CD8-positive, alpha-beta memory T cell (primary cell): ENCODE measurements at regions of chr5 and their contacts with region 1.

Region 1: DNA sequence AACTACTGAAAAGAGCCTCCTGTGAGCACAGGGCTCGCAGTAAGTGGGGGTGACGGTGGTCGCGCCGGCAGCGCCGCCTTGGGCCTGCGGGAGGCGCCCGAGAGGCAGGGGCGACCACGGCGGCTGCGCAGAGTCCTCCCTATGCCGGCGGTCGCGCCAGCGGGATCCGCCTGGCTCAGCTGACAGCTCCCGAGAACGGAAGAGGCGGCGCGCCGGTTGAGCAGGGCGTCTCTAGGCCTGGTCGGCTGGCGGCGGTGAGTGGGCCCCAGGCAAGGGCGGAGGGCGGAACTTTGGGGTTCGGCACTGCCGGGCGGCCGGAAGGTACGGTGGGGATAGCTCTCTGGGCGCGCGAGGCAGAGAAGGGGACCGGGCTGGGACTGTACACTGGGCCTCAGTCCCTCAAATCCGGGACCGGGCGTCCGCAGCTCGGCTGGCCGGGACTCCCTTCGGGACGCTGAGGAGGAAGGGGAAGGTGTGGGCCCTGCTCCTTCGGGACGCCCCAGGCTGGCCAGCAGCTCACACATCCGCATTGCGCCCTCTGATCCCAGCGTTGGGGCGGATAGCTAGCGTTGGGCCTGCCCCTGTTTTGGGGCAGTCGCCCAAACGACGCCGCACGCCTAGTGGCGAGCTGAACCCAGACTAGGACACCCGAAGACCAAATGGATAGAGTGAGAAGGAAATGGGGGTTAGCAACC is at the start of gene RNF14:
- DNase-seq: peak; percentile 91 to 96 (median 94)
- H3K4me3 ChIP-seq: peak within 1 kb of the TSS; percentile 69
- H3K4me3 Mint-ChIP-seq: peak within 1 kb of the TSS; percentile 87 to 97 (median 95)
- H3K27ac ChIP-seq: peak within 1 kb of the TSS; percentile 74
- H3K27ac Mint-ChIP-seq: peak within 1 kb of the TSS; percentile 96 to 99 (median 98)
- H3K4me1 ChIP-seq: peaks cover 17% of the 10 kb centered on the region
- H3K4me1 Mint-ChIP-seq: peaks cover 24 to 44% (median 40%) of the 10 kb centered on the region in 3 donors
- H3K27me3 ChIP-seq: no peaks in the 10 kb centered on the region
- H3K27me3 Mint-ChIP-seq: no peaks in the 10 kb centered on the region
- total RNA-seq, gene RNF14: 46.2 to 49.6 TPM

Region 2: DNA sequence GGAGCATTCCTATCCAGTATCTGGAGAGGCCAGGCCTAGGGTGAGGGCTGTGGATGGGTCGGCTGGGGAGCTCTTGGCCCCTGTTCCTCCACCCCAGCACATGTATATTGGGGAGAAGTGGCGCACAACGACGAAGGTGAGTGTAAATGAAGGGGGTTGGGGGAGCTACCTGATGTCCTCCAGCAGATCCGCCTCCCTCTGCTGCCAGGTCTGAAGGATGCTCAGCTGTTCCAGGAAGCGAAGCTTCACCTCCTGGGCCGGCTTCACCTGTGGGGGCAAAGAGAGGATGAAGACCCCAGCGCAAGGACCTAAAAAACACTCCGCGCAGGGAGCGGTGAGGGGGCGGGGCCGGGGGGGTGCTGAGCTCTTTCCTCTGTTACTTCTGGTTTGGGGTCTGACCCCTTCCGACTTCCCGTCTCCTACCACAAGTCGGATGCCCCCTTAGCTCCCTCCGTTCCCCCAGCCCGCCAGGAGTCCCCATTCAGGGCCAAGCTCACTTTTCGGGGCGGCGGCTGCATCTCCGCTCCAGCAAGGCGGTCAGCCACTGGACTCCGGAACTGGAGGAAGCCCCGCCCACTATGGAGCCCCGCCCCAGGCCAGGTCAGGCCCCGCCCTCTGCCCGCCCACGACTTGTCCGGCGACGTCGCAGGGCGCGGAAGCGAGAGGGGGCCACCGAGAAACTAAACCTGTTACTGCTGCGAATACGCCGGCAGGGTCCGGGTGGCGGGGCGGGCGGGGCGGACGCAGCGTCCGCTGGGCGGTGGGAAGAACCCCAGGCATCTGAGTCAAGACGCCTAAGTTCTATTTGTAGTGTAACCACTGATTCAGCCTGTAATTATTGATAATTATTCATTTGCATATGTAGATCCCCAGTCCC is 318.0 kb before region 1 on chr5 and contains the start of gene FCHSD1:
- CTCF ChIA-PET with region 1: no interaction called
- POLR2A ChIA-PET with region 1: interaction called, 10 read pairs
- DNase-seq: peak; percentile 81 to 90 (median 82)
- H3K4me3 ChIP-seq: peak within 1 kb of the TSS; percentile 78
- H3K4me3 Mint-ChIP-seq: peak within 1 kb of the TSS; percentile 82 to 99 (median 95)
- H3K27ac ChIP-seq: peak within 1 kb of the TSS; percentile 73
- H3K27ac Mint-ChIP-seq: peak within 1 kb of the TSS; percentile 85 to 99 (median 96)
- H3K4me1 ChIP-seq: peaks cover 26% of the 10 kb centered on the region
- H3K4me1 Mint-ChIP-seq: peaks cover 40 to 59% (median 49%) of the 10 kb centered on the region in 3 donors
- H3K27me3 ChIP-seq: no peaks in the 10 kb centered on the region
- H3K27me3 Mint-ChIP-seq: peaks cover 0 to 4% of the 10 kb centered on the region in 2 donors
- total RNA-seq, gene FCHSD1: 31.1 to 33.7 TPM

Region 3: GRCh38 chr5:141681695-141682641 is 287.1 kb before region 1 on chr5 and contains the start of gene ARAP3:
- CTCF ChIA-PET with region 1: interaction called, 11 read pairs
- POLR2A ChIA-PET with region 1: no interaction called
- DNase-seq: peak in 4 of 5 donors; percentile 17 to 64 (median 39)
- H3K4me3 ChIP-seq: peak within 1 kb of the TSS; percentile 50
- H3K4me3 Mint-ChIP-seq: peak within 1 kb of the TSS; percentile 65 to 91 (median 84)
- H3K27ac ChIP-seq: peak within 1 kb of the TSS; percentile 38
- H3K27ac Mint-ChIP-seq: peak within 1 kb of the TSS; percentile 7 to 93 (median 78)
- H3K4me1 ChIP-seq: peaks cover 27% of the 10 kb centered on the region
- H3K4me1 Mint-ChIP-seq: peaks cover 25 to 46% (median 29%) of the 10 kb centered on the region in 3 donors
- H3K27me3 ChIP-seq: no peaks in the 10 kb centered on the region
- H3K27me3 Mint-ChIP-seq: peaks cover 0 to 4% of the 10 kb centered on the region in 2 donors
- total RNA-seq, gene ARAP3: 6.9 to 7.9 TPM

Region 4: GRCh38 chr5:141701360-141702119 is 267.5 kb before region 1 on chr5:
- CTCF ChIA-PET with region 1: interaction called, 17 read pairs
- POLR2A ChIA-PET with region 1: no interaction called
- DNase-seq: no peak
- H3K4me3 ChIP-seq: peak overlapping the region; percentile 16
- H3K4me3 Mint-ChIP-seq: peak overlapping the region in 4 of 7 donors; percentile 11 to 91 (median 62)
- H3K27ac ChIP-seq: no peak overlapping the region
- H3K27ac Mint-ChIP-seq: peak overlapping the region in 6 of 8 donors; percentile 20 to 98 (median 63)
- H3K4me1 ChIP-seq: peaks cover 12% of the 10 kb centered on the region
- H3K4me1 Mint-ChIP-seq: peaks cover 12 to 20% (median 13%) of the 10 kb centered on the region in 3 donors
- H3K27me3 ChIP-seq: peaks cover 18% of the 10 kb centered on the region
- H3K27me3 Mint-ChIP-seq: peaks cover 25 to 40% of the 10 kb centered on the region in 2 donors

Region 5: GRCh38 chr5:141870871-141871270 is 98.2 kb before region 1 on chr5:
- CTCF ChIA-PET with region 1: no interaction called
- POLR2A ChIA-PET with region 1: no interaction called
- DNase-seq: peak in 1 of 5 donors; percentile 6
- H3K4me3 ChIP-seq: no peak overlapping the region
- H3K4me3 Mint-ChIP-seq: no peak overlapping the region
- H3K27ac ChIP-seq: no peak overlapping the region
- H3K27ac Mint-ChIP-seq: no peak overlapping the region
- H3K4me1 ChIP-seq: no peaks in the 10 kb centered on the region
- H3K4me1 Mint-ChIP-seq: peaks cover 4 to 8% (median 5%) of the 10 kb centered on the region in 3 donors
- H3K27me3 ChIP-seq: peaks cover 30% of the 10 kb centered on the region
- H3K27me3 Mint-ChIP-seq: peaks cover 35 to 68% of the 10 kb centered on the region in 2 donors

Region 6: DNA sequence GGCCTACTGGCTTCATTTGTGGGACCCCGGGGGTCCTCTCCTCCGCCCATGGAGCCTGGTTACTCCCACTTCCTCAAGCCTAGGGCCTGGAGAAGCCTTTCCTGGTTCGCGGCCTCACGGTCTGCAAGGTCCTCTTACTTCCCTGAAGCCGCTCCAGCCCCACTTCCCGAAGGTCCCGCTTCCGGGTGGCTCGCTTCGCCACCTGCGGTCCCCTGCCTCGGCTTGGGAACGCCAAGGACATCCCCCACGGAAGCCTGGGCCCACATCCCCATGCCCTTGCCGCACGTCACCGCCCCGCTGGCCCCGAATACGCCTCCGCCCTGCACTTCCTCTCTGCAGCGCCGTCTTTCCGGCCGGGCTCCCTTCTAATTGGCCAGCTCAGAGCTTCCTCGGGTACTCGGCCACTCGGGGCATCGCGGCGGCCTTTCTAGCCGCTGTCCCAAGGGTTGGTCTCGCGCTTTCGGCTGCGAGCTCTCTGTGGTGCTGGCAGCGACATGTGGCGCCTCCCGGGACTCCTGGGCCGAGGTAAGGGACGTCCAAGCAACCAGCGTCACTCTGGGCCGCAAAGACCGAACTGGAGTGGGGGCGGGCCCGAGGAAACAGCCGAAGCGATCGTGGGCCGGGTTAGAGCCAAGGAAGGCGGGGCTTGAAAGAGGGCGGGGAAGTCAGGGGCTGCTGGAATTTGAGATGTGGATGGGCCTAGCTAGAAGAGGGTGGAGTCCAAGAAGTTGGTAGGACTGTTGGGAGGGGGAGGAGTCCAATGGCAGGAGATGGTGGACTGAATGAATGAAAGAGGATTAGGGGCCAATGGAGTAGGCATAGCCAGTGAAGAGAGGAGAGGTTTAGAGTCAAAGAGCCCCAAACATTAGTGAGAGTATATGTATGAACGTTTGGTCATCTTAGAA is 45.4 kb before region 1 on chr5 and contains the start of gene DELE1:
- CTCF ChIA-PET with region 1: interaction called, 15 read pairs
- POLR2A ChIA-PET with region 1: interaction called, 17 read pairs
- DNase-seq: peak; percentile 83 to 93 (median 88)
- H3K4me3 ChIP-seq: peak within 1 kb of the TSS; percentile 92
- H3K4me3 Mint-ChIP-seq: peak within 1 kb of the TSS; percentile 80 to 98 (median 90)
- H3K27ac ChIP-seq: peak within 1 kb of the TSS; percentile 97
- H3K27ac Mint-ChIP-seq: peak within 1 kb of the TSS; percentile 92 to 99 (median 98)
- H3K4me1 ChIP-seq: peaks cover 15% of the 10 kb centered on the region
- H3K4me1 Mint-ChIP-seq: peaks cover 16 to 47% (median 37%) of the 10 kb centered on the region in 3 donors
- H3K27me3 ChIP-seq: no peaks in the 10 kb centered on the region
- H3K27me3 Mint-ChIP-seq: no peaks in the 10 kb centered on the region
- total RNA-seq, gene DELE1: 48.8 to 50.2 TPM

Region 7: DNA sequence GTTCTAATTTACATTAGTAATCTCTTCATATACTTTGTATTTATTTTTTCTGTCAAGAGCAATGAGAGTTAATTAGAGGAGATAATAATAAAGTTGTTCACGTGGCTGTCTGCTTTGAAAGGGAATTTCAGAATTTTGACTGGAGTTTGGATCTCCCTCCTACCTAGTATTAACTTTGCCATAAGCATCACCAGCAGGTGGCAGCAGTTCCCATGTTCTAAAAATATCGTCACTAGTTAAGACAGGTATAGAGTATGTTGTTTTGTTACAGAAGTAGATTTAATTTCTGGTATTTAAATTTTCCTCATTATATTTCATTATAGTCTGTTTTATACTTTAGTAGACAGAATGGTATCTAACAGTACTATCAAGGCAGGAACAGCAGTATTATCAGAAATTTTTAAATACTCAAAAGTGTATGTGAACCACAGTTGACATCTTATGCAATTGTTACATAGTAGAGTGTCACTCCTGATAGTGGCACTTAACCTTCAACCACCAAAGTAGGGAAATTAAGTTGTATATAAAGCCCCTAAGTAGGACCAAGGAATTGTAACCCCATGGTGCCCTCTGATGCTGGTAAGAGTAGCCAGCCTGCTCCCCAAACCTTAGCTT is 23.4 kb after region 1 on chr5:
- CTCF ChIA-PET with region 1: interaction called, 30 read pairs
- POLR2A ChIA-PET with region 1: interaction called, 3 read pairs
- DNase-seq: peak; percentile 53 to 80 (median 68)
- H3K4me3 ChIP-seq: no peak overlapping the region
- H3K4me3 Mint-ChIP-seq: no peak overlapping the region
- H3K27ac ChIP-seq: no peak overlapping the region
- H3K27ac Mint-ChIP-seq: peak overlapping the region in 2 of 8 donors; percentile 0 to 11
- H3K4me1 ChIP-seq: peaks cover 9% of the 10 kb centered on the region
- H3K4me1 Mint-ChIP-seq: peaks cover 3 to 14% (median 5%) of the 10 kb centered on the region in 3 donors
- H3K27me3 ChIP-seq: no peaks in the 10 kb centered on the region
- H3K27me3 Mint-ChIP-seq: peaks cover 0 to 1% of the 10 kb centered on the region in 2 donors

Region 8: GRCh38 chr5:142012792-142013388 is 43.8 kb after region 1 on chr5 and contains the start of gene GNPDA1:
- CTCF ChIA-PET with region 1: interaction called, 42 read pairs
- POLR2A ChIA-PET with region 1: interaction called, 5 read pairs
- DNase-seq: peak; percentile 64 to 78 (median 66)
- H3K4me3 ChIP-seq: peak within 1 kb of the TSS; percentile 82
- H3K4me3 Mint-ChIP-seq: peak within 1 kb of the TSS; percentile 83 to 94 (median 89)
- H3K27ac ChIP-seq: peak within 1 kb of the TSS; percentile 67
- H3K27ac Mint-ChIP-seq: peak within 1 kb of the TSS; percentile 88 to 97 (median 92)
- H3K4me1 ChIP-seq: peaks cover 62% of the 10 kb centered on the region
- H3K4me1 Mint-ChIP-seq: peaks cover 55 to 73% (median 63%) of the 10 kb centered on the region in 3 donors
- H3K27me3 ChIP-seq: no peaks in the 10 kb centered on the region
- H3K27me3 Mint-ChIP-seq: no peaks in the 10 kb centered on the region
- total RNA-seq, gene GNPDA1: 62.4 to 70.0 TPM